Dendritic cell treated with granulocyte-macrophage colony-stimulating factor and Interleukin-4, amounts not matched to agents 40 ng/mL and 50 ng/mL, for 4 days (primary cell): ENCODE measurements at regions of chr6 and their contacts with region 1.

Region 1: DNA sequence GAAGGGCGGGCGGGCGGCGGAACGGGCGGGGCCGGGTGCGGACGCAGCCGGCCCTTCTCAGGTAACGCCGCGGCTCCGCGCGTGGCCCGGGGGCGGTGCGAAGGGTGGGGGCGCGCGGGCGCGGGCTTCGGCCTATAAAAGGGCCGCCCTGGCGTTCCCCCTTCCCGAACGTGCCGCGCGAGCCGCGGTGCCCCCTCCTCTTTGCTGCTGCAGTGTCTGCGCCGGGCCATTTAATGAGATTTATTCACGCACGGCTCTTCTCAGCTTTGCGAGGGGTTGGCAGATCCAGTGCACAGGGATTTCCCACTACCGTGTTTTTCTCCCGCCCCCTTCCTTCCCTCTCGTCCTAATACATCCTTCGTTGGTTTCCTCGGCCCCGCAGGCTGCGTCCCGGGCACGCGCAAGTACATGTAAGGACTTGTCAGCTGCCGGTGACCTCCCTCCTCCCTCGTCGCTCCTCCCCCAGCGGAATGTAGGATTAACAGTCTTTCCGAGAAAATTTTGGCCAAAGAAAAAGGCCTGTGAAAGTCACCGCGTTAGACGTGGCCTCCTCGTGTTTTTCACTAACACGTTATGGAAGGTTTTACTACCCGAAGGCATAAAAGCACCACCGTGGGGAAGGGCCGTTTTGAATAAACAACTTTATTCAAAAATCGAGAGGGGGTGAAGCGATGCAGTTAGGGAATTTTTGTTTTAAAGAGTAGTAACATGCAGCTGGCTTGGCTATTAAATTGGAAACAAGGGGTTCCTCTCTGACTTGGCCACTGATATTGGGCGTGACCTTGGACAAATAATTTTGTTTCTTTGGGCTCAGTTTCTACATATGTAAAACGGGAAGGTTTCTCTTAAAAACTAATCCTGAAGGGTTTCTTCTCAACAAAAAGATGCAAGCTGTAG is 966 bp upstream of the REV3L start:
- H3K4me3 Mint-ChIP-seq: peak overlapping the region; percentile 91
- H3K27ac Mint-ChIP-seq: peak overlapping the region; percentile 99
- H3K4me1 Mint-ChIP-seq: peaks cover 34% of the 10 kb centered on the region
- H3K27me3 Mint-ChIP-seq: no peaks in the 10 kb centered on the region

Region 2: GRCh38 chr6:110981202-110981600 is 502.8 kb before region 1 on chr6:
- intact Hi-C with region 1: loop called (anchors 10 kb)
- H3K4me3 Mint-ChIP-seq: peak overlapping the region; percentile 93
- H3K27ac Mint-ChIP-seq: peak overlapping the region; percentile 97
- H3K4me1 Mint-ChIP-seq: peaks cover 39% of the 10 kb centered on the region
- H3K27me3 Mint-ChIP-seq: no peaks in the 10 kb centered on the region

Region 3: DNA sequence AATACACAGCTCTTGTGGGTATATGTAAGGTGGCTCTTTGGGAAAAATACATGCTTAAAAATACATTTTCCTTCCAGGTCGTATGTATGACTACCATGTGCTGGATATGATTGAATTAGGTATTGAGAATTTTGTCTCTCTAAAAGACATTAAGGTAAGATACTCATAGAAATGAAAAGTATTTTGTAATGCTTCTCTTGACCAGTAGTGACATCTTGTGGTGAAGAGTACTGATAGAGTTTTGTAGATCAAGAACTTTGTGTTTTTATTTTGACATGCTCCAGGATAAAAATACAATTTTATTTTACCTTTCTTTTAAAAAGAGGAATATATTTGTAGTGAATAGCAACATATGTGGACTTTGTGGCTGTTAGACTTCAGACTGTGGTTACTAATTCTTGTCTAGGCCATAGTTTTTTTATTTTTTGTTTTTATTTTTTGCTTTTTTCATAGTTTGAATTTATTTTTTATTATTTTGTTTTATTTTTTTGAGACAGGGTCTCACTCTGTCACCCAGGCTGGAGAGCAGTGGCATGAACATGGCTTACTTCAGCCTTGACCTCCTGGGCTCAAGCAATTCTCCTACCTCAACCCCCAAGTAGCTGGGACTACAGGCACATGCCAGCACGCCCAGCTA is 484.2 kb before region 1 on chr6:
- intact Hi-C with region 1: no loop called
- H3K4me3 Mint-ChIP-seq: no peak overlapping the region
- H3K27ac Mint-ChIP-seq: no peak overlapping the region
- H3K4me1 Mint-ChIP-seq: no peaks in the 10 kb centered on the region
- H3K27me3 Mint-ChIP-seq: no peaks in the 10 kb centered on the region

Region 4: DNA sequence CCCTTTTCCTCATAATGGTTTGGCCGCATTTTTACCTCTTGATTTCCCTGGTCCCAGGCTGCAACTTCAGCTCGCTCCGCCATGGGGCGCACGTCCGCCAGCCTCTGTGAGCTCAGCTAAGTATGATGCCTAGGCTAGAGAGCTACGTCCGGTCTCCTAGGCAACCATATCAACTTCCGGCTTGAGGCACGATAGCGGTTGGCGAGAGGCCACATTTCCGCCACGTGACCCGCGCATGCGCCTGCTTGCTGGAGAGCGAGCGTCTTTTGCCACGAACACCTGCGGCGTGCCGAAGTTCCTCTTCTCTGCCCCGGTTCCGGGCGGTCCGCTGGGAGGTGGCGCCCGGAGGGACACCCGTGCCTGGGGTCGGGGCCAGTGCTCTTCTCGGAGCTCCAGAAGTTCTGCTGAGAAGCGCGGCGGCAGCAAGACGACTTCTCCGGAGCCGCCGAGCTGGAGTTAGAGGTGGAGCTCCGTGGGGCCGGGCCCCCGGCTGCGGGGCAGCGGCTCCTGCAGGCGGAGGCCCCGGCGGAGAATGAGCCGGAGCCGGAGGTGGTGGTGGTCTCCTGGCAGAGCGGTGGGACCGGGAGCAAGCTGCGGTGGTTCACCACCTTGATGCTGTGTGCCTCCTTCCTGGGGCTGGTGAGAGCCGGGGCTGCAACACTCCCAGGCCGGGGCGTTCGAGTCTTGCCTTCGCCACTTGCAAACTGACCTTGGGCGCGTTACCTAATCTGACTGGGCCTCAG is 224.7 kb before region 1 on chr6:
- intact Hi-C with region 1: loop called (anchors 1 kb)
- H3K4me3 Mint-ChIP-seq: peak overlapping the region; percentile 79
- H3K27ac Mint-ChIP-seq: peak overlapping the region; percentile 89
- H3K4me1 Mint-ChIP-seq: peaks cover 25% of the 10 kb centered on the region
- H3K27me3 Mint-ChIP-seq: peaks cover 4% of the 10 kb centered on the region

Region 5: DNA sequence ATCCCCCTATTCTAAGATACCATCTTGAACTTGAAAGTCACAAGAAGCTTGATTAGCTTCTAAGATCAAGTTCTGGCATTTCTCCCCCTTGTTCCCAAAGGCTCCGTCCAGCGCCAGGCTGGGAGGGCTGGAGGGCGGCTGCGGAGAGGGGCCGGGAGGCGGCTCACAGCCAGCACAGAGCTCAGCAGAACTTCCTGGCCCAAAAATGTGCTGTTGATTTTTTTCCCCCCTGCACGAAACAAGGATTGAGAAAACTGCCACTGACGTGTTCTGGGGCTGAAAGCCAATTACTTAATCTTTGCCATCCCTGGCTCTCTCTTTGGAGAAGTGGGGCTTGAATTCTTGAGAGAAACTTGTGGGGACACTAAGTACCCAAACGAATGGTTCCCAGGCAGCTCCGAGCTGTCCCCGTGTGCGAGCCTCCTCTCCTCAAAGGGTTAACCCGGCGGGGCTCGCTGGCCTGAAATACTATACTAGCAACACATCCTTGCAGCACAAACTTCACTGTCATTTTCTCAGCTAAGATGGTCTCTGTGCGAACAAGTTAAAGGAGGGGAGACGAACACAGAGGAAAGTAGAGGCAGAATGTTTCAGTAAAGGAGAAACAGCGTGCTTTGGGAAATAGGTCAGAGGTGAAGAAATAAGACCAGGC is 121.2 kb after region 1 on chr6:
- intact Hi-C with region 1: loop called (anchors 10 kb)
- H3K4me3 Mint-ChIP-seq: peak overlapping the region; percentile 81
- H3K27ac Mint-ChIP-seq: peak overlapping the region; percentile 75
- H3K4me1 Mint-ChIP-seq: peaks cover 42% of the 10 kb centered on the region
- H3K27me3 Mint-ChIP-seq: no peaks in the 10 kb centered on the region

Region 6: GRCh38 chr6:111642463-111643158 is 158.6 kb after region 1 on chr6:
- intact Hi-C with region 1: loop called (anchors 5 kb)
- H3K4me3 Mint-ChIP-seq: no peak overlapping the region
- H3K27ac Mint-ChIP-seq: no peak overlapping the region
- H3K4me1 Mint-ChIP-seq: no peaks in the 10 kb centered on the region
- H3K27me3 Mint-ChIP-seq: no peaks in the 10 kb centered on the region

Region 7: DNA sequence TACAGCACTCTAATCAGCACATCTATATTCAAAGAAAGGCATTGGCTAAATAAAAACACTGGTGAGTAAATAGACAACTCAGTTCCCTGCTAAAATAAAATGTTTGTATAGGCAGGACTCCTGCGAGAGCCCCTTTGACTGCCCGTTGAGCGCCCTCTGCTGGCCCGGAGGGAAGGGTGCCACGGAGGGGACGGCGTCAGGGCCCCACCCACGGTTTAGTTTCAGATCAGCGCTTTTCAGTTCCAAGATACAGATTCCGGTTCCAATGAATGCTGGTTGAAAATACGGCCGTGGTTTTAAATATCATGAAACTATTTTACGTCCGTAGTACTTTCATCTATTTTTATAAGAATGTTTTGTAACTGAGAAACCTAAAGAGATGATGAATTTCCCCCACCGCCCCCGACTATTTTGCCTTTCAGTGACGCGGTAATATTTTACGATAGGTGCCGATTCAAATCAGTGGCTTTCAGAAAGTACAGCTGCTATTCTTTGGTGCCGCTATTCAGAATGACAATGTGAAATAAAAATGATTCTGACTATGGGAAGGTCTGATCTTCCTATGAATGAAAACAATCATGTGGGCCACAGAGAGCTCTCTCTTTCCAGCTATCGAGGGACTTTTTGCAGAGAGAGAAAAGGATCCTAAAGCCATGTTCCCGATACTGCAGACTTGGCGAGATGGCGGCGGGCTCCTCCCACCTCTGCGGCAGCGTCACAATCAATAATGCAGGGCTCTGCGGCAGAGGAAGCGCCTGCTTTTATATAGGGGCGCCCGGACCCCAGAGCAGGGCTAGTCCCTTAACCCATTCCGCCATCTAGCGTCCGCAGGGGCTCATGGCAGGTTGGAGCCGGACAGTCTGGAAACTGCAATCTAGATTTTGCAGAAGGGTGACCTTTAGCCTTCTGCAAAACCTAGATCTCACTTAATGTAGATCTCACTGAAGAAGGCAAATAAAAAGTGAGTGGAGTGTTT is 559.3 kb after region 1 on chr6:
- intact Hi-C with region 1: loop called (anchors 5 kb)
- H3K4me3 Mint-ChIP-seq: peak overlapping the region; percentile 76
- H3K27ac Mint-ChIP-seq: peak overlapping the region; percentile 92
- H3K4me1 Mint-ChIP-seq: peaks cover 10% of the 10 kb centered on the region
- H3K27me3 Mint-ChIP-seq: no peaks in the 10 kb centered on the region